ENCODE measurements at regions of chr17 and their contacts with region 1.

Region 1: GRCh38 chr17:68291844-68292695 is 775 bp downstream of the ARSG start:
- DNase-seq: peak; percentile 96 to 98 (median 97)
- H3K4me3 ChIP-seq: peak overlapping the region; percentile 18 to 90
- H3K4me3 Mint-ChIP-seq: peak overlapping the region; percentile 74 to 87 (median 84)
- H3K27ac ChIP-seq: peak overlapping the region; percentile 90
- H3K27ac Mint-ChIP-seq: peak overlapping the region; percentile 89 to 99 (median 93)
- H3K4me1 ChIP-seq: peaks cover 78% of the 10 kb centered on the region
- H3K4me1 Mint-ChIP-seq: peaks cover 53 to 84% (median 63%) of the 10 kb centered on the region in 4 donors
- H3K27me3 ChIP-seq: no peaks in the 10 kb centered on the region
- H3K27me3 Mint-ChIP-seq: no peaks in the 10 kb centered on the region

Region 2: DNA sequence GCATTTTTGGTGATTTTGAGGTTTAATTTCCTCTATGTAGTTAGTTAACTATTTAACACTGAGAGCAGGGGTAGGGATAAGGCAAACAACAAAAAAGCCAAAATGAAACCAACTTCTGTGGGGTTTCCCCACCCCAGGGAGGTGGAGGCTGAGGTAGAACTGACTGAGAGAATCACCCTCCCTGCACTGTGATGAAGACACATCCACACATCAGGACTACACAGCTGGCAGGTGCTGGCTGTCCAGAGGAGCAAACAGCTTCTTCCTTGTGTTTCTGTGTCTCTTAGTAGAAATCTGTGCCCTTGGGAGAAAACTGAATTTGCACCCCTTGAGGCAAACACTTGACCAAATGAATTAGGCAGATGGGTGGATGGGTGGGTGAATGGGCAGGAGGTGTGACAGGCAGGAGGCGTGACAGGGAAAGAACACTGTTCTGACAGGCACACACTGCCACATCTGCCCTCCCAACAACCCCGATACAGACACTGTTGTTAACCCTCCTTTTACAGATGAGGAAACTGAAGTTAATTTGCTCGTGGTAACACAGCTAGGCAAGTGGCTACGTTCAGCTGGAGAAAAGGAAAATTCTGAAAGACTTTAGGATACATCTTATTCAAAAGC is 107.1 kb before region 1 on chr17:
- CTCF ChIA-PET with region 1: no interaction called
- POLR2A ChIA-PET with region 1: interaction called, 34 read pairs
- intact Hi-C with region 1: loop called (anchors 5 kb)
- DNase-seq: peak; percentile 69 to 84 (median 75)
- H3K4me3 ChIP-seq: peak overlapping the region; percentile 1 to 54
- H3K4me3 Mint-ChIP-seq: peak overlapping the region; percentile 78 to 100 (median 94)
- H3K27ac ChIP-seq: peak overlapping the region; percentile 80
- H3K27ac Mint-ChIP-seq: peak overlapping the region; percentile 90 to 96 (median 95)
- H3K4me1 ChIP-seq: peaks cover 73% of the 10 kb centered on the region
- H3K4me1 Mint-ChIP-seq: peaks cover 46 to 89% (median 65%) of the 10 kb centered on the region in 4 donors
- H3K27me3 ChIP-seq: no peaks in the 10 kb centered on the region
- H3K27me3 Mint-ChIP-seq: no peaks in the 10 kb centered on the region

Region 3: GRCh38 chr17:68247445-68248198 is 44.4 kb before region 1 on chr17 and contains the start of gene AMZ2:
- CTCF ChIA-PET with region 1: no interaction called
- POLR2A ChIA-PET with region 1: interaction called, 66 read pairs
- intact Hi-C with region 1: loop called (anchors 5 kb)
- DNase-seq: peak; percentile 94 to 99 (median 97)
- H3K4me3 ChIP-seq: peak within 1 kb of the TSS; percentile 76 to 95
- H3K4me3 Mint-ChIP-seq: peak within 1 kb of the TSS; percentile 85 to 94 (median 94)
- H3K27ac ChIP-seq: peak within 1 kb of the TSS; percentile 99
- H3K27ac Mint-ChIP-seq: peak within 1 kb of the TSS; percentile 97 to 99 (median 99)
- H3K4me1 ChIP-seq: peaks cover 37% of the 10 kb centered on the region
- H3K4me1 Mint-ChIP-seq: peaks cover 33 to 59% (median 37%) of the 10 kb centered on the region in 4 donors
- H3K27me3 ChIP-seq: no peaks in the 10 kb centered on the region
- H3K27me3 Mint-ChIP-seq: no peaks in the 10 kb centered on the region
- total RNA-seq, gene AMZ2: 66.1 to 81.2 TPM

Region 4: GRCh38 chr17:68302066-68302601 is 10.1 kb after region 1 on chr17:
- CTCF ChIA-PET with region 1: interaction called, 3 read pairs
- POLR2A ChIA-PET with region 1: interaction called, 20 read pairs
- intact Hi-C with region 1: no loop called
- DNase-seq: no peak
- H3K4me3 ChIP-seq: no peak overlapping the region
- H3K4me3 Mint-ChIP-seq: no peak overlapping the region
- H3K27ac ChIP-seq: no peak overlapping the region
- H3K27ac Mint-ChIP-seq: peak overlapping the region in 4 of 7 donors; percentile 17 to 78 (median 32)
- H3K4me1 ChIP-seq: peaks cover 27% of the 10 kb centered on the region
- H3K4me1 Mint-ChIP-seq: peaks cover 24 to 59% (median 42%) of the 10 kb centered on the region in 4 donors
- H3K27me3 ChIP-seq: no peaks in the 10 kb centered on the region
- H3K27me3 Mint-ChIP-seq: no peaks in the 10 kb centered on the region

Region 5: DNA sequence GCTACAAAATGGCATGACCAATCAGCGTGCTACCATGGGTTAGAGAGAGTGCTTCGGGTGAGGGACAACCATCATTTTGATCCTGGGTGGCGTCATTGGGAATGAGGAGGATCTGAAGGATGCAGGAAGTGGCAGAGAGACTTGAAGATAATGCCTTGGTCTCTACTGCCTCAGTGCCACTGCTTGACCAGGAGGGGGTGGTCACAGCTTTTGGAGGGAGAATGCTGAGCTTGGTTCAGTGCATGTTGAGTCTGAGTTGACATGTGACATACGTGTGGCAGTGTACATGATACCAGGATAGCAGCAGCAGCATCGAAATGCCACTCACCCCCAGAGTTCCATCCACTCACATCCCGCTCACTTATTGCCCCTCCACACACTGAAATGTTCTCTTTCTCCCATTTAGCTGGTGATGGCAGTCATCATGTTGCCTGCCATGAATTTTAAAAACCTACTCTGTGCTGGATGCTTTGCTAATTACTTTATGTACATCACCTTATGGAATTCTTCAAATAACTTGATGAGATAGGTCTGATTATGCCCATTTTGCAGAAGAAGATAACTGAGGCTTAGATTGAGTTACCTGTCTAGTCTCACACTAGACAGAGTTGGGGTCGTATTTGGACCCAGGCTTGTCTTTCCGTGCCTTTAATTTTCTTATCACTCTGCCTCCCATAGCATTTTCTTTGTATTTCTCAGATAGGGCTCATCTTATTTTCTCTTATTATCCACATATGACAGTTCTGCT is 35.9 kb after region 1 on chr17:
- CTCF ChIA-PET with region 1: interaction called, 6 read pairs
- POLR2A ChIA-PET with region 1: interaction called, 14 read pairs
- intact Hi-C with region 1: no loop called
- DNase-seq: no peak
- H3K4me3 ChIP-seq: no peak overlapping the region
- H3K4me3 Mint-ChIP-seq: no peak overlapping the region
- H3K27ac ChIP-seq: no peak overlapping the region
- H3K27ac Mint-ChIP-seq: peak overlapping the region in 1 of 7 donors; percentile 51
- H3K4me1 ChIP-seq: peaks cover 12% of the 10 kb centered on the region
- H3K4me1 Mint-ChIP-seq: peaks cover 14 to 40% (median 28%) of the 10 kb centered on the region in 4 donors
- H3K27me3 ChIP-seq: no peaks in the 10 kb centered on the region
- H3K27me3 Mint-ChIP-seq: no peaks in the 10 kb centered on the region

Region 6: DNA sequence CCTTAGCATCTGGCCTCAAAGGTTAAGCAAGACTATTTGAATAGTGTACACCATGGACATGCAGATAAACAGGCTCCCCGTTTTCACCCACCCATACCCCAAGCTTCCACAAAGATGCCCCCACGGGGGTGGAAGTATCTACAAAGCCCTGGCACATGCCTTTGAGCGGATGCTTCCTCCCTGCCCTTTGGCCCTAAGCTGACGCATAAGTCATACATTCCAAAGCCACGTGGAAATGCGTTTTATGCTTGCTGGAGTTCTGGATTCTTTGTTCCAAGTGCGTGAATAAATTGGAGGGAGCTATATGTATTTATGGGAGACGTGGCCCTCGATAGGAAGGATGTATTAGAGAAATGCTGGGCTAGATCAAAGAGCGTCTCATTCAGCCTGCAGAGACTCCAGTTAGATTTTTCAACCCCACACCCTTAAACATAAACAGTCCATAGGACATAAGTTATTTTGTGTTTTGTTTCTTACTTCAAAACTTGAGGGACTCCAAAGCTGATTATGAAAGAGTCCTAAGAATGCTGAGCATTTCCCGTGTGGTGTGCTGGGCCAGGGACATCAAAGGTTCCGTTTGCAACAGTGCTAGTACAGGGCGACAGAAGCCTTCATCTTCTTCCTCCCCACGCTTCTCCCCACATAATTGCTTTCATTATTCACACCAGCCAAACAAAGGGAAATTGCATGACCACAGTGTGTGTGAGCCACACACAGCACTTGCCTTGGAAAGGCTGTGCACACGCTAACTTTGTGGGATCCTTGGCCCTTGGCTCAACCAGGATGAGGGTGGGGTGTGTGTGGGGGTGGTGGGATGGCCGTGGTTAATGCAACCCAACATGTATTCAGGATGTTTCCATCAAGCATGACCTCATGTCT is 91.6 kb after region 1 on chr17:
- CTCF ChIA-PET with region 1: interaction called, 3 read pairs
- POLR2A ChIA-PET with region 1: interaction called, 19 read pairs
- intact Hi-C with region 1: no loop called
- DNase-seq: peak in 3 of 5 donors; percentile 26 to 28 (median 27)
- H3K4me3 ChIP-seq: peak overlapping the region in 1 of 2 donors; percentile 20
- H3K4me3 Mint-ChIP-seq: peak overlapping the region; percentile 43 to 83 (median 66)
- H3K27ac ChIP-seq: no peak overlapping the region
- H3K27ac Mint-ChIP-seq: peak overlapping the region; percentile 13 to 86 (median 67)
- H3K4me1 ChIP-seq: peaks cover 26% of the 10 kb centered on the region
- H3K4me1 Mint-ChIP-seq: peaks cover 22 to 43% (median 27%) of the 10 kb centered on the region in 4 donors
- H3K27me3 ChIP-seq: no peaks in the 10 kb centered on the region
- H3K27me3 Mint-ChIP-seq: no peaks in the 10 kb centered on the region

Region 7: GRCh38 chr17:68457539-68458259 is 165.6 kb after region 1 on chr17:
- CTCF ChIA-PET with region 1: interaction called, 3 read pairs
- POLR2A ChIA-PET with region 1: interaction called, 38 read pairs
- intact Hi-C with region 1: loop called (anchors 1 kb)
- DNase-seq: peak; percentile 97 to 99 (median 99)
- H3K4me3 ChIP-seq: peak overlapping the region; percentile 34 to 57
- H3K4me3 Mint-ChIP-seq: peak overlapping the region; percentile 76 to 92 (median 86)
- H3K27ac ChIP-seq: peak overlapping the region; percentile 64
- H3K27ac Mint-ChIP-seq: peak overlapping the region; percentile 85 to 97 (median 95)
- H3K4me1 ChIP-seq: peaks cover 60% of the 10 kb centered on the region
- H3K4me1 Mint-ChIP-seq: peaks cover 36 to 66% (median 49%) of the 10 kb centered on the region in 4 donors
- H3K27me3 ChIP-seq: no peaks in the 10 kb centered on the region
- H3K27me3 Mint-ChIP-seq: no peaks in the 10 kb centered on the region

Measured in CD4-positive, alpha-beta memory T cell (primary cell).